K562 (cell line): ENCODE measurements at regions of chr20 and their contacts with region 1.

Region 1: GRCh38 chr20:58829531-58829941 is 21.2 kb downstream of the GNAS-AS1 start:
- DNase-seq: no peak
- ATAC-seq: no peak
- H3K4me3 ChIP-seq: no peak overlapping the region
- H3K27ac ChIP-seq: no peak overlapping the region
- H3K4me1 ChIP-seq: no peaks in the 10 kb centered on the region
- H3K27me3 ChIP-seq: peaks cover 7 to 16% of the 10 kb centered on the region in 2 experiments
- CTCF ChIP-seq: no peak
- EP300 ChIP-seq: no peak
- POLR2A ChIP-seq: no peak
- RAD21 ChIP-seq: no peak

Region 2: GRCh38 chr20:58471193-58472164 is 358.1 kb before region 1 on chr20:
- CTCF ChIA-PET with region 1: no interaction called
- POLR2A ChIA-PET with region 1: no interaction called
- in situ Hi-C with region 1: loop called (anchors 10 kb)
- intact Hi-C with region 1: no loop called
- DNase-seq: no peak
- ATAC-seq: peak; percentile 69
- H3K4me3 ChIP-seq: no peak overlapping the region
- H3K27ac ChIP-seq: no peak overlapping the region
- H3K4me1 ChIP-seq: peaks cover 0 to 17% of the 10 kb centered on the region in 2 experiments; a peak in 2 of 5 replicates
- H3K27me3 ChIP-seq: peaks cover 13 to 53% of the 10 kb centered on the region in 2 experiments; a peak in 4 of 5 replicates
- CTCF ChIP-seq: peak in 1 of 3 experiments; percentile 27; a peak in 2 of 6 replicates
- EP300 ChIP-seq: no peak
- POLR2A ChIP-seq: no peak
- RAD21 ChIP-seq: peak in 1 of 2 experiments; percentile 23; a peak in 1 of 4 replicates